Calu3 (cell line): ENCODE measurements at regions of chr2 and their contacts with region 1.

Region 1: DNA sequence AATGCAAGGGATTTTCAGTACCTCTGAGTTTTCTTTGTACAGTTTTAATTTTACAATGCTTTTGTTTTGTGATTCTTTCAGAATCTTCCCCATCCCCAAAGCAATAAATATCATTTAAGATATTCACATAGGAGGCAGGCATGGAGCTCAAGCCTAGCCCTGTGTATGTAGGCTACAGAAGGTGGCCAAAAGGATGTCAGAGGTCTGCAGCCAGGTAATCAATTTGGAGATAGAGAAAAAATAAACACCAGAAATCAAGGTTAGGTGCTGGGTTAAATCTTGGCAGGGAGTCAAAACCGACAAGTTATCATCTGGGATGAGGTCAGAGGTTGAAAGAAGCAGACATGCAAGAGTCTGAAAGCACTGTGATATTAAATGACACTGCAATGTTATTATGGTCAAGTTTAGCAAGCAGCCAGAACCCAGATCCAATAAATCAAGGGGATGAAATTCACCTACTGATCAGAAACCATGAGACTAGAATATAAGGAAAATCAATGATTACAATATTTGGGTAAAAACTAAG is 45.1 kb upstream of the LRP1B start:
- DNase-seq: no peak
- H3K4me3 Mint-ChIP-seq: no peak overlapping the region
- H3K27ac Mint-ChIP-seq: peak overlapping the region; percentile 20
- H3K4me1 Mint-ChIP-seq: peaks cover 13% of the 10 kb centered on the region
- H3K27me3 Mint-ChIP-seq: no peaks in the 10 kb centered on the region
- CTCF ChIP-seq: no peak

Region 2: DNA sequence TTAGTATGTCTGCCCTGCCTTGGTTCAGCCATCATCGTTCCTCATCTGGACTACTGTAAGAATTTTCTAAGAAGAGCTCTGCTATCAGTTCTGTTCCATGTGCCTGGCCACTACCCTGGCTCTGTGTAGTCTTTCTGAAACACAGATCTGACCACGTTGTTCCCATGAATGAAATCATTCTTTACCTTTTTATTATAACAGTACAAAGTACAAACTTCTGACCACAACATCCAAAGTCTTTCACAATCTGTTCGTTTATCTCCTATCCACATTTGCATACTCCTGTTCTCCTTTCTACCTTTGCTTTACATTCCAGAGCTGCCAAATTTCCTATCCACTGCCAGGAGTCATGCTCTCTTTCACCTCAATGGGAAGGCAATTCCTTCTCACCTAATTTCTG is 239.6 kb after region 1 on chr2:
- CTCF ChIA-PET with region 1: no interaction called
- intact Hi-C with region 1: loop called (anchors 10 kb)
- DNase-seq: peak; percentile 18
- H3K4me3 Mint-ChIP-seq: peak overlapping the region; percentile 3
- H3K27ac Mint-ChIP-seq: peak overlapping the region; percentile 40
- H3K4me1 Mint-ChIP-seq: peaks cover 12% of the 10 kb centered on the region
- H3K27me3 Mint-ChIP-seq: no peaks in the 10 kb centered on the region
- CTCF ChIP-seq: no peak